B cell (primary cell): ENCODE measurements at regions of chr15 and their contacts with region 1.

Region 1: DNA sequence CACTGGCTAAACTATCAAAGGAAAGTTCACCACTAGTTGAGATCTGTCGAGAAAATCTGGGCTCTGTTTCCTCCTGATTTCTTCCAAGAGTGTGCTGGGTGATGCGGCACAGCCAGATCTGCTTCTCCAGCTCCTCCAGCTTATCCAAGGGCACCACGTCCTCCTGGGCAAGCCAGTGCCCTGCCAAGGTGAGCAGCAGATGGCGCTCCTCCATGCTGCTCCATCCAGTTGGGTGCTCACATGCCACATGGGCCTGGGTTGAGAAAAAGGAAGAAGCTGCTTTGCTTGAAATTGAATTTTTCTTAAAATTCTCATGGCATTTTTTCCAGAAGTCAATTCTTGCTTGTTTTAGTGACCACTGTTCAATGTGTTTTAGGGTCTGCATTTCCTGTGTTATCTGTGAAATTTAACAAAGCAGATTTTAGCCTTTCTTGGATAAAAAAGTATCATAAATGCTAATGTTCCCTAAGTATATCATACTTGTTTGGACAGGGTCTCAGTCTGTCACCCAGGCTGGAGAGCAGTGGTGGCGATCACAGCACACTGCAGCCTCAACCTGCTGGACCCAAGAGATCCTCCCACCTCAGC is 47.3 kb downstream of the EIF3J start:
- DNase-seq: peak; percentile 63
- ATAC-seq: peak; percentile 76
- H3K4me3 ChIP-seq: no peak overlapping the region
- H3K4me3 Mint-ChIP-seq: no peak overlapping the region
- H3K27ac ChIP-seq: peak overlapping the region in 1 of 2 donors; percentile 18
- H3K27ac Mint-ChIP-seq: no peak overlapping the region
- H3K4me1 ChIP-seq: no peaks in the 10 kb centered on the region
- H3K4me1 Mint-ChIP-seq: peaks cover 3% of the 10 kb centered on the region
- H3K27me3 ChIP-seq: no peaks in the 10 kb centered on the region
- H3K27me3 Mint-ChIP-seq: no peaks in the 10 kb centered on the region
- CTCF ChIP-seq: peak; percentile 56

Region 2: GRCh38 chr15:44545913-44546802 is 38.1 kb before region 1 on chr15:
- CTCF ChIA-PET with region 1: interaction called, 12 read pairs
- POLR2A ChIA-PET with region 1: no interaction called
- intact Hi-C with region 1: no loop called
- DNase-seq: peak; percentile 30
- ATAC-seq: peak; percentile 17
- H3K4me3 ChIP-seq: no peak overlapping the region
- H3K4me3 Mint-ChIP-seq: peak overlapping the region; percentile 29
- H3K27ac ChIP-seq: peak overlapping the region in 1 of 2 donors; percentile 20
- H3K27ac Mint-ChIP-seq: peak overlapping the region; percentile 41
- H3K4me1 ChIP-seq: peaks cover 11 to 14% of the 10 kb centered on the region in 2 donors
- H3K4me1 Mint-ChIP-seq: peaks cover 48% of the 10 kb centered on the region
- H3K27me3 ChIP-seq: no peaks in the 10 kb centered on the region
- H3K27me3 Mint-ChIP-seq: no peaks in the 10 kb centered on the region
- CTCF ChIP-seq: peak; percentile 21

Region 3: DNA sequence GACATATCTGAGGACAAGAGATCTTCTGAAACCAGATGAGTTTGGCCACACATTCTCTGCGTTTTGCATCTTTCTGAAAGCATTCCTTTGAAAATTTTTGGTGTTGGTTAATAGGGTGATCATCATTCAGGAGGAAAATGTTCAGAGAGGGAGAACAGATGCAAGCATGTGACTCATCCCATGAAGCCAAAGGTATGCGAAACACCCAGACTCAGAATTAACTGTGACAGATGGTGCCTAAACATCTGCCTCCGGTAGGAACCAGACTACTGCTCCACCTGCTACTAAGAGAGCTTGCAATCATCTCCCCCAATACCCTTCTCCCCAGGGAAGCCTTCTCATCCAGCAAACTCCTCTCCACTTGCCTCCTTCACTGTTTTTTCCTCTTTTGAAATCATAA is 198.3 kb after region 1 on chr15:
- CTCF ChIA-PET with region 1: interaction called, 14 read pairs
- POLR2A ChIA-PET with region 1: no interaction called
- intact Hi-C with region 1: no loop called
- DNase-seq: no peak
- ATAC-seq: no peak
- H3K4me3 ChIP-seq: no peak overlapping the region
- H3K4me3 Mint-ChIP-seq: no peak overlapping the region
- H3K27ac ChIP-seq: no peak overlapping the region
- H3K27ac Mint-ChIP-seq: no peak overlapping the region
- H3K4me1 ChIP-seq: peaks cover 5 to 6% of the 10 kb centered on the region in 2 donors
- H3K4me1 Mint-ChIP-seq: peaks cover 7% of the 10 kb centered on the region
- H3K27me3 ChIP-seq: no peaks in the 10 kb centered on the region
- H3K27me3 Mint-ChIP-seq: no peaks in the 10 kb centered on the region
- CTCF ChIP-seq: no peak

Region 4: DNA sequence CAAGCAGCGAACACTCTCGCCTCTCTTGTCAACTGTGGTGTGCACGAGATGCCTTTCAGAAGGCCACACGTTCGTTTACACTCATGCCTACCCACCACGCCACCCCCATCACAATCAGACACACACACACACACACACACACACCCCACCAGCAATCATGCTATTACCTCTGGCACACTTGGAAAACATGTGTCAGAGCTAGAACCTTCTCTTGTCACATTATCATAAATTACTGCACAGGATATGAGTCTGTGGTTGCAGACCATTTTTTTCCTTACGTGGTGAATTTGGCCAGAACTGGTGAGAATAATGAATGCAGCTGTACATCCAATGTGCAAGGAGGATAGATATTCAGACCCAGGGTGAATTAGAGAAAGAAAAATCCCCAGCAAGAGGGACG is 204.5 kb after region 1 on chr15:
- CTCF ChIA-PET with region 1: interaction called, 14 read pairs
- POLR2A ChIA-PET with region 1: no interaction called
- intact Hi-C with region 1: no loop called
- DNase-seq: no peak
- ATAC-seq: no peak
- H3K4me3 ChIP-seq: no peak overlapping the region
- H3K4me3 Mint-ChIP-seq: no peak overlapping the region
- H3K27ac ChIP-seq: no peak overlapping the region
- H3K27ac Mint-ChIP-seq: no peak overlapping the region
- H3K4me1 ChIP-seq: peaks cover 5% of the 10 kb centered on the region in 2 donors
- H3K4me1 Mint-ChIP-seq: peaks cover 7% of the 10 kb centered on the region
- H3K27me3 ChIP-seq: no peaks in the 10 kb centered on the region
- H3K27me3 Mint-ChIP-seq: no peaks in the 10 kb centered on the region
- CTCF ChIP-seq: no peak

Region 5: DNA sequence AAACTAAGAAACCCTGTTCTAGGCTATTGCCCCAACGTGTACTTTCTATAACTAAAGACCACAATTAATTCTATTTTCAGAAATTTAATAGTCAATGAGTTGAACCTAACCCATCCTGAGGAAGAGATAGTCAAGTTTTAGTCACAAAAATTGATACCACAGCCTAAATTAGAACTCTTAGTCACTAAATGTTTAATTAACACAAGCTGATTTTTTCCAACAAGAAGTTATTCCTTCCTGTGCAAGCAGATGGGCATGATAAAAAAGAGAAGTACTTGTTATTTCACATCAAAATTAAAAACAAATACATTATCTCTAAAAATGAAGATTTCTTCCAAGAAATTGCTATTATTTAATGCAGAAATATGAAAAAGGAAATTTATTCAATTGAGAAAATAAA is 333.9 kb after region 1 on chr15:
- CTCF ChIA-PET with region 1: interaction called, 5 read pairs
- POLR2A ChIA-PET with region 1: no interaction called
- intact Hi-C with region 1: loop called (anchors 10 kb)
- DNase-seq: no peak
- ATAC-seq: no peak
- H3K4me3 ChIP-seq: no peak overlapping the region
- H3K4me3 Mint-ChIP-seq: no peak overlapping the region
- H3K27ac ChIP-seq: no peak overlapping the region
- H3K27ac Mint-ChIP-seq: no peak overlapping the region
- H3K4me1 ChIP-seq: no peaks in the 10 kb centered on the region
- H3K4me1 Mint-ChIP-seq: no peaks in the 10 kb centered on the region
- H3K27me3 ChIP-seq: no peaks in the 10 kb centered on the region
- H3K27me3 Mint-ChIP-seq: no peaks in the 10 kb centered on the region
- CTCF ChIP-seq: no peak